ENCODE measurements at regions of chr17 and their contacts with region 1.

Region 1: DNA sequence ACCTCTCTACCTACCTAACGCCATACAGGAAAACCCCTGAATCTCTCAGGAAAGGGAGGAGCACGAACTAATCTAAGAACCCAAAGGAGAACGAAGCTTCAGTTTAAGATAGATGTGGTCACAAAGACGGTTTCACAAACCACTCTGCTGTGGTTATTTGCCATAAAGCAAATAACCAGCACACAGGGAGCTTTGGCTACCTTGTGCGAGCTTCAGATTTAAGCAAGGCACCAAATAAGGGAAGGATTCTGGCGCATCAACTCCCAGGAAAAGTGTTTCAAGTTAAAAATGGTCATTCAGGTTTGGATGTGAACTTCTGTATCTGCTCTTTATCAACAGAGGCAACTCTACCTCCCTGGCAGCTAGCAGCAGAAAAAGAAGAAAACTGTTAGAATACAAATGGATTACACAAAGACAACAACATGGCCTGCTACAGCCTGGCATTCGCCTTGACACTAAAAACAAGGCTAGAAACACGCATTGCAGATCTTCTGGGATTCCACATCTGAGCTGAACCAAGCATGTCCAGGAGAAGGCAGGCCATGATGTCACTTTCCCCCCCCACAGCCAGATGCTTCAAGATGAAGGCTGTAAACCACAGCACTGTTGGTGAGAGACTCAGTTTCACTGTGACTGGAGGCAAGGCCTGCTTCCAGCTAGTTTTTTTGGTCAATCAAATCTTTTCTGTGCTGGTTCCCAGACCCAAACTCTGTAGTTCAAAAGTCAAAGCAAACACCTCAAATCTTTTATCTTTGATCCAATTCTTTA is 43.6 kb downstream of the SMG6 start:
- DNase-seq: peak in 8 of 10 donors; percentile 31 to 66 (median 56)
- ATAC-seq: peak; percentile 48 to 76
- H3K4me3 Mint-ChIP-seq: peak overlapping the region; percentile 58 to 84 (median 76)
- H3K27ac Mint-ChIP-seq: peak overlapping the region; percentile 86 to 97 (median 96)
- H3K4me1 Mint-ChIP-seq: peaks cover 25 to 76% (median 68%) of the 10 kb centered on the region in 4 donors
- H3K27me3 Mint-ChIP-seq: no peaks in the 10 kb centered on the region

Region 2: GRCh38 chr17:2094891-2095535 is 164.9 kb before region 1 on chr17:
- POLR2A ChIA-PET with region 1: no interaction called
- DNase-seq: no peak
- ATAC-seq: no peak
- H3K4me3 Mint-ChIP-seq: no peak overlapping the region
- H3K27ac Mint-ChIP-seq: peak overlapping the region in 2 of 10 donors; percentile 20 to 33
- H3K4me1 Mint-ChIP-seq: peaks cover 11 to 25% (median 23%) of the 10 kb centered on the region in 4 donors
- H3K27me3 Mint-ChIP-seq: no peaks in the 10 kb centered on the region

Region 3: DNA sequence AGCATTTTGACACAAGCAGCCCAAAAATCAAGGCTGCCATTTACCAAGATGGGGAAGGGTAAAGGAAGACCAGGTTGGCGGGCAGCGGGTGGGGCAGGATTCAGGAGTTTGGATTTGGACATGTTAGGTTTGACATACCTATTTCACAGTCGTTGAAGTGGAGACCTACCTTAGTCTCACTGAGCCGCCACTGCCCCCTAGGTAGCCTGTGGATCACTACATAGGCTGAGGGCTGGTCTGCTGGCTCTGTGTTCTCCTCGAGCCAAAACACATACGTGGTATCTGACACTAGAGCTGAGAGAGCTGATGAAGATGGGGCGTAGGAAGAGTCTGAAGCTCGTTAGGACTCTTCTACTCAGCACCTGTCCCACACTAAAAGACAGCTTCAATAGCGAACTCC is 89.9 kb before region 1 on chr17:
- POLR2A ChIA-PET with region 1: no interaction called
- DNase-seq: no peak
- ATAC-seq: no peak
- H3K4me3 Mint-ChIP-seq: no peak overlapping the region
- H3K27ac Mint-ChIP-seq: peak overlapping the region in 3 of 10 donors; percentile 6 to 41 (median 14)
- H3K4me1 Mint-ChIP-seq: peaks cover 0 to 8% (median 0%) of the 10 kb centered on the region in 4 donors
- H3K27me3 Mint-ChIP-seq: no peaks in the 10 kb centered on the region

Region 4: DNA sequence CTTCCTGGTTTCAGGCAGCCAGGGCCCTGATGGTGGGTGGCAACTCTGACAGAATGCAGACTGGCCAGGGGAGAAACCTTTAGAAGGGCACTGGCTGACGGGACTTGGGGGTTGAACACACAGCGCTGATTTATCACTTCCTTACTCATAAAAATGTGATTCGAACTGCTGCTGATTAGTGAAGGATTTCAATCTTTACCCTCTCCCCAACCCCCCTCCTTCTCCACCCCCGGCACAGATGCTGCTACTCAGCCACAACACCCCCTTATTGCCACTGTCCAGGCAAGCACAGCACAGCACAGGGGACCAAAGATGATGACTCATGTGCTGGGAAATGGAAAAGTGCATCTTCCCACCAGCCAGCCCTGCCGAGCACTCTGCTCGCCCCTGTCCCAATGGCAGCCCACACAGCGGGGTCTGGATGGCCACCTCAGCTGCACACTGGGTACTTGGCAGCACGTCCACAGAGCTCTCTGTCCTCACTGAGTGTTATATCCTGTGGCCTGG is 26.5 kb before region 1 on chr17:
- POLR2A ChIA-PET with region 1: no interaction called
- DNase-seq: no peak
- ATAC-seq: no peak
- H3K4me3 Mint-ChIP-seq: no peak overlapping the region
- H3K27ac Mint-ChIP-seq: peak overlapping the region in 1 of 10 donors; percentile 22
- H3K4me1 Mint-ChIP-seq: peaks cover 8 to 25% (median 20%) of the 10 kb centered on the region in 4 donors
- H3K27me3 Mint-ChIP-seq: no peaks in the 10 kb centered on the region

Region 5: GRCh38 chr17:2244545-2245525 is 15.1 kb before region 1 on chr17:
- POLR2A ChIA-PET with region 1: interaction called, 59 read pairs
- DNase-seq: peak; percentile 68 to 89 (median 77)
- ATAC-seq: peak; percentile 99
- H3K4me3 Mint-ChIP-seq: no peak overlapping the region
- H3K27ac Mint-ChIP-seq: peak overlapping the region in 9 of 10 donors; percentile 40 to 94 (median 65)
- H3K4me1 Mint-ChIP-seq: peaks cover 8 to 39% (median 25%) of the 10 kb centered on the region in 4 donors
- H3K27me3 Mint-ChIP-seq: no peaks in the 10 kb centered on the region

Region 6: DNA sequence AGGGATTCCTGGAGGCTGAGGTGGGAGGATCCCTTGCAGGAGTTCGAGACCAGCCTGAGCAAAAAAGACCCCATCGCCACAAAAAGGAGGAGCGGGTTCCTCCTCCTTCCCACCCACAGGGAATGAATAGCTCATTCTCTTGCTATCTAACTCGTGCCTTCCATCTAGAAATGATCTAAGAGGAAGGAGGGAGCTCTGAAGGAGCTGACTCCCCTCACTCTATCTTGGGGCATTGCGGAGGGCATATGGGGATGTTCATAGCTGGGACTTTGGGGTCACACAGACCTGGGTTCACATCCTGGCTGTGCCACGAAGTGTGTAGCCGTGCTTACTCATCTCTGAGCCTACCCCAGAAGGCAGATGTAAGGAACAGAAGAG is 88.3 kb after region 1 on chr17:
- POLR2A ChIA-PET with region 1: interaction called, 10 read pairs
- DNase-seq: no peak
- ATAC-seq: no peak
- H3K4me3 Mint-ChIP-seq: no peak overlapping the region
- H3K27ac Mint-ChIP-seq: peak overlapping the region in 2 of 10 donors; percentile 29 to 60
- H3K4me1 Mint-ChIP-seq: peaks cover 6 to 22% (median 12%) of the 10 kb centered on the region in 4 donors
- H3K27me3 Mint-ChIP-seq: no peaks in the 10 kb centered on the region